Dorsolateral prefrontal cortex (tissue), 120 donors: ENCODE measurements at regions of chr1 and their contacts with region 1.

Region 1: GRCh38 chr1:29202584-29203340 is 21.1 kb upstream of the SRSF4 start:
- DNase-seq: peak; percentile 89 to 97 (median 94)
- H3K4me3 ChIP-seq: peak overlapping the region in 2 of 59 donors; percentile 10 to 21
- H3K27ac ChIP-seq: peak overlapping the region in 43 of 59 donors; percentile 14 to 78 (median 54)
- H3K27me3 ChIP-seq: no peaks in the 10 kb centered on the region
- CTCF ChIP-seq: peak; percentile 88 to 100 (median 98)

Region 2: GRCh38 chr1:28642847-28643635 is 559.7 kb before region 1 on chr1 and contains the start of gene TAF12:
- intact Hi-C with region 1: loop called in 1 of 2 experiments (anchors 5 kb)
- DNase-seq: peak; percentile 80 to 92 (median 86)
- H3K4me3 ChIP-seq: peak within 1 kb of the TSS; percentile 57 to 98 (median 84)
- H3K27ac ChIP-seq: peak within 1 kb of the TSS; percentile 52 to 95 (median 90)
- H3K27me3 ChIP-seq: no peaks in the 10 kb centered on the region
- CTCF ChIP-seq: peak in 55 of 56 donors; percentile 29 to 87 (median 62)
- total RNA-seq, gene TAF12: 10.2 to 23.1 (median 15.5) TPM

Region 3: DNA sequence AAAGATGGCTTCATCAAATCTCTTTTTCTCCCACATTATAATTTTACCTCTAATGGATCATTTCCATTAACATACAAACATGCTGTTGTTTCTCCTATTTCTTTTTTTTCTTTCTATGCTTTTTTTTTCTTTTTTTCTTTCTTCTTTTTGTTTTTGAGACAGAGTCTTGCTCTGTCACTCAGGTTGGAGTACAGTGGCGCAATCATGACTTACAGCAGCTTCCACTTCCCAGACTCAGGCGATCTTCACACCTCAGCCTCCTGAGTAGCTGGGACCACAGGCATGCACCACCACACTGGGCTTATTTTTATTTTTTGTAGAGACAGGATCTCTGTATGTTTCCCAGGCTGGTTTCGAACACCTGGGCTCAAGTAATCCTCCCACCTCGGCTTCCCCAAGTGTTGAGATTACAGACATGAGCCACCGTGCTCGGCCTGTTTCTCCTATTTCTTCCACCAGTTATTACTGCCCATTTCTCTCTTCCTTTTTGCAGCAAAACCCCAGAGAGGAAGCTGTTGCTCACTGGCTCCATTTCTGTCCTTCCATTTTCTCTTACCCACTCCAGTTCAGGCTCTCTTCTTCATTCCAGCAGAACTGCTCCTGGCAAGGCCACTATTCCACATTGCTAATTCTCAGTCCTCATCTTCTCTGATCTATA is 422.9 kb before region 1 on chr1:
- intact Hi-C with region 1: loop called (anchors 5 to 10 kb)
- DNase-seq: no peak
- H3K4me3 ChIP-seq: no peak overlapping the region
- H3K27ac ChIP-seq: no peak overlapping the region
- H3K27me3 ChIP-seq: no peaks in the 10 kb centered on the region
- CTCF ChIP-seq: no peak

Region 4: DNA sequence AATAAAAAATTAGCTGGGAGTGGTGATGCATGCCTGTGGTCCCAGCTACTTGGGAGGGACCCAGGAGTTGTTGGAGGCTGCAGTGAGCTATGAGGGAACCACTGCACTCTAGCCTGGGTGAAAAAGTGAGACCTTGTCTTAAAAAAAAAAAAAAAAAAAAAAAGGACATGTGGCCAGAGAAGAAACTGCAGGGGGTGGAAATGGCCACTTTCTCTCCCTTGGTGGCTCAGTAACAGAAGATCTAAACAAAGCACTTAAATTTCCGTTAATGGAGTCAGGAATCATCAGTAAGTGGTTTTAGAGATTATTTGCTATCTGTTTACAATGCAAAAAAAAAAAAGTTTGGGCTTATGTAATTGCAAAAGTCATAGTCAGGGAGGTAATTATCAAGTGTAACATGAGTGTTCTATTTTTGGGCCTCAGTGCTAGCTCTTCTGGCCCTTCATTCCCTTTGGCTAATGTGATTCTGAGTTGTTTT is 410.1 kb before region 1 on chr1:
- intact Hi-C with region 1: loop called (anchors 5 to 10 kb)
- DNase-seq: no peak
- H3K4me3 ChIP-seq: no peak overlapping the region
- H3K27ac ChIP-seq: no peak overlapping the region
- H3K27me3 ChIP-seq: no peaks in the 10 kb centered on the region
- CTCF ChIP-seq: peak in 9 of 56 donors; percentile 5 to 35 (median 18)

Region 5: DNA sequence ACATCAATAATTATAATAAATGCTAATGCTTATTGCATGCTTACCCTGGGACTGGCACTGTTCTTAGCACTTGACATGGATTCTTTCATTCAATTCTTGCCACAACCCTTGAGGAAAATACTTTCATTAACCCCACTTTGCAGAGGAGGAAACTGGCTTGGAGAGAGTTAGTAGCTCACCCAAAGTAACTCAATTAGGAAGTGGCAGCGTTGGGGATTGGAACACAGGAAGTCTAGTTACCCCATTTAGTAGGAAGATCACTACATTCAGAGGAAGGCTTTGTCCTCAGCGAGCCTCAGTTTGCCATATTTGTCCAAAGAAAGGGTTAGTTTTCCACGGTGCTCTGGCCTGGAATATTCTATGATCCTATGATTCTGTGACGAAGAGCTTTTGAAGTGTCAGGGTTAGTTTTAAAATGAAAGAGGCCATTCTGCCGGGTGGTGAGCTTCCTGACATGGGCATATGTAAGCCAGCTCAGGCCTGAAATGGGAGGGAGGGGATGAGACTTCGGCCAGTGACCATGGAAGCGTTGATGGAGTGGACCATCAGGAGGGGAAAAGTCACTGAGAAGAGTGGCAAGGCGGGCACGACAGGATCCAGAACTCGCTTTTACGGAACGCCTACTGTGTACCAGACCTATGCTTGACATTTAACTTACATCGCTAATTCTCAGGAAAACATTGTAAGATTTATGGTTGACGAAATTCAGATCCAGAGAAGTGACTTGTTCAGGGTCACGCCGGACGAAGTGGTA is 316.6 kb before region 1 on chr1:
- intact Hi-C with region 1: loop called (anchors 2 kb)
- DNase-seq: no peak
- H3K4me3 ChIP-seq: peak overlapping the region in 53 of 59 donors; percentile 58 to 89 (median 78)
- H3K27ac ChIP-seq: peak overlapping the region in 26 of 59 donors; percentile 2 to 80 (median 44)
- H3K27me3 ChIP-seq: no peaks in the 10 kb centered on the region
- CTCF ChIP-seq: no peak

Region 6: GRCh38 chr1:29033829-29034466 is 168.8 kb before region 1 on chr1:
- intact Hi-C with region 1: loop called (anchors 5 to 10 kb)
- DNase-seq: no peak
- H3K4me3 ChIP-seq: no peak overlapping the region
- H3K27ac ChIP-seq: no peak overlapping the region
- H3K27me3 ChIP-seq: no peaks in the 10 kb centered on the region
- CTCF ChIP-seq: peak; percentile 41 to 93 (median 77)

Region 7: DNA sequence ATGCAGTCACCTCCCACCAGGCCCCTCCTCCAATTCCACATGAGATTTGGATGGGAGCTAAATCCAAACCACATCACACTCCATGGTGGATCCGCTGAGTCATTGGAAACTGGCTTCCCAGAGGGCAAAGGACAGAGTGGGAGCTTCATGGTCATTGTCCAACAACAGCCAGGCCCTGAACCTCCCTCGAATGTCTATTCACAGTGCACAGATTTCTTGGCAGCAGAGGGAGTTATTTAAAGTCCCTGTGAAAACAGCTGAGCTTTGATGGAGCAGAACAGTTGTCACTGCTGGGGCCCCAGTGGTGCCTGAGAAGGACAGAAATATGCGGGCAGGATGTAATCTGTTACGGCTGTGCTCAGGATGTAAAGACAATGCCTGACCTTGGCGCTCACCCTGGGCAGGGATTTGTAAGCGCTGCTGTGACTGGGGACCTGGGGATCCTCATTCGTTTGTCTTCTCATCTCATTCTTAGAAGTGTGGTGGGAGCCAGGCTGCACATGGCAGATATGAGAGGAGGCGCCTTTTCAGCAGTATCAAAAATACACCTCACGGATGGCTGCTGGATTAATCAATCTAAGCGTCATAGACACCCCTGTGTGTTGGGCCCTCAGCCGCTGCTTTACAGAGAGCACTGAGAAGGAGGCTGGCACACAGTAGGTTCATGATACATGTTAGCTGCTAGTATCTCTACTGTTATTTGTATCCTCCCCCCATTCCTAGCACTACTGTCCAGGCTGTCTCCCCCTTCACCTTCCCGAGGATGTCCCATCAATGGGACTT is 472.9 kb after region 1 on chr1:
- intact Hi-C with region 1: no loop called
- DNase-seq: peak in 1 of 10 donors; percentile 29
- H3K4me3 ChIP-seq: no peak overlapping the region
- H3K27ac ChIP-seq: no peak overlapping the region
- H3K27me3 ChIP-seq: peaks cover 0 to 2% (median 0%) of the 10 kb centered on the region in 45 donors
- CTCF ChIP-seq: no peak